Head of caudate nucleus (tissue), 42 donors: ENCODE measurements at regions of chr1 and their contacts with region 1.

Region 1: DNA sequence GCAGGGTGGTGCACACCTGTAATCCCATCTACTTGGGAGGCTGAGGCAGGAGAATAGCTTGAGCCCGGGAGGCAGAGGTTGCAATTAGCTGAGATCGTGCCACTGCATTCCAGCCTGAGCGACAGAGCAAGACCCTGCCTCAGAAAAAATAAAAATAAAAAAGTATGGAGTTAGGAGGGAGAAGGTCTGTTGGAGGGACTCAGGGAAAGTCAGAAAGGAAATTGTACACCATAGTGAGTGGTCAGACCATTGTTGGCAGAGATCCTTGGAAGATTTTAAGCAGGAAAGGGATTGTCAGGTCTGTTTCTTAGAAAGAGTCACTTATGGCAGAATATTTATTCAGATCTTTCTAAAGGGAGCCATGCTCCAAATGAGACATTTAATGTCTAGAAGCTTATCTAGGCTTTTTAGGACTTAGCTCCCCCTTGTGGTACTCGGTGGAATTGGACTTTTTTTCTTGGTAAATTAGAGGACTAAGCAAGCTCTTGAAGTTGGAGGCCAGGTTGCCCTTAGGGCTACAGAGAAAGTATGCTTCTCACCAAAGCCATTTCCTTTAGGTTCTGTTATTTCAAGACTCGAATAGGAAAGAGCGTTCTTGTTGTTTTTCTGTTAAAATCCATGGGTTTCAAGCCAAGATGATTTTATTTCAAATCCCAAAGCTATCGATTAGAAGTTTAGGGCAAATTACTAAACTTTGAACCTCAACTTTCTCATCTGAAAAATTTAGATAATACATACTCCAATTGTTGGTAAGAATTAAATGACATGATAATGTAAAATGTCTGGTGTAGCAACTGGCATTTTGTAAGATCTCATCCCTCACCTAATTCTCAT is 16.5 kb downstream of the MIA3 start:
- DNase-seq: peak in 31 of 42 donors; percentile 16 to 93 (median 67)

Region 2: GRCh38 chr1:222465211-222466041 is 169.0 kb before region 1 on chr1:
- intact Hi-C with region 1: loop called (anchors 2 kb)
- DNase-seq: peak; percentile 73 to 95 (median 88)